Common myeloid progenitor, CD34-positive (primary cell): ENCODE measurements at regions of chr3 and their contacts with region 1.

Region 1: DNA sequence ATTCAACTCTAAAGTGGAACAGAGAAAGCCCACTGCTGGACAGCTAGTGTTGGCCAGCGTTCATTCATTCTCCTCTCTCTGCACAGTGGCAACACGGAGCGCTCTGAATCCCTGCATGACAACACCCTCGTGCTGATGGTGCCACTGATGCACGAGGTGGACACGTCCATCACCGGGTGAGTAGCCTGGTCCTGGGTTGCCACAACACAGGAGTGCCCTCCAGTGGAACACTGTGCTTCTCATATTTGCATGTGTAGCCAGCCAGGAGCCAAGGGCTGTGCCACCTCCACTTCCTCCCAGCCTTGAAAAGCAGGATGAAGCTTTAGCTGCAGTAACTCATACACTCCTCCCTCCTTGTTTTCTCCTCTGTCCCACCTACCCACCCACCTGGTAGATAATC is 120.0 kb upstream of the CTDSPL start:
- DNase-seq: peak; percentile 6 to 15 (median 12)
- H3K4me3 ChIP-seq: no peak overlapping the region
- H3K27ac ChIP-seq: no peak overlapping the region
- H3K4me1 ChIP-seq: peaks cover 0 to 5% (median under 1%) of the 10 kb centered on the region in 4 experiments
- H3K27me3 ChIP-seq: no peaks in the 10 kb centered on the region

Region 2: GRCh38 chr3:37753428-37753827 is 11.8 kb after region 1 on chr3:
- CTCF ChIA-PET with region 1: interaction called, 10 read pairs
- POLR2A ChIA-PET with region 1: no interaction called
- DNase-seq: peak in 2 of 3 donors; percentile 22 to 49
- H3K4me3 ChIP-seq: no peak overlapping the region
- H3K27ac ChIP-seq: no peak overlapping the region
- H3K4me1 ChIP-seq: peaks cover 0 to 7% (median 0%) of the 10 kb centered on the region in 4 experiments
- H3K27me3 ChIP-seq: no peaks in the 10 kb centered on the region